Cardiac septum (tissue), 1 donor: ENCODE measurements at regions of chr17 and their contacts with region 1.

Region 1: GRCh38 chr17:28125530-28126378 is 83.3 kb downstream of the NLK start:
- DNase-seq: no peak

Region 2: GRCh38 chr17:28033972-28034714 is 91.6 kb before region 1 on chr17:
- intact Hi-C with region 1: loop called (anchors 10 kb)
- DNase-seq: no peak

Region 3: GRCh38 chr17:28252436-28252835 is 126.7 kb after region 1 on chr17:
- intact Hi-C with region 1: no loop called
- DNase-seq: no peak